Caco-2 (cell line): ENCODE measurements at regions of chr1 and their contacts with region 1.

Region 1: GRCh38 chr1:186680245-186681061 is at the start of gene PTGS2:
- DNase-seq: peak; percentile 93 to 95
- H3K4me3 ChIP-seq: peak within 1 kb of the TSS; percentile 59
- H3K4me3 Mint-ChIP-seq: peak within 1 kb of the TSS; percentile 99
- H3K27ac Mint-ChIP-seq: peak within 1 kb of the TSS; percentile 99
- H3K4me1 ChIP-seq: no peaks in the 10 kb centered on the region
- H3K4me1 Mint-ChIP-seq: peaks cover 10% of the 10 kb centered on the region
- H3K27me3 ChIP-seq: no peaks in the 10 kb centered on the region
- H3K27me3 Mint-ChIP-seq: no peaks in the 10 kb centered on the region
- CTCF ChIP-seq: peak; percentile 36 to 46
- total RNA-seq, gene PTGS2: 18.4 and 24.2 TPM in 2 replicates

Region 2: GRCh38 chr1:186404454-186405051 is 275.9 kb before region 1 on chr1:
- CTCF ChIA-PET with region 1: interaction called, 4 read pairs
- POLR2A ChIA-PET with region 1: no interaction called
- intact Hi-C with region 1: loop called (anchors 1 kb)
- DNase-seq: peak in 1 of 2 experiments; percentile 43
- H3K4me3 ChIP-seq: no peak overlapping the region
- H3K4me3 Mint-ChIP-seq: no peak overlapping the region
- H3K27ac Mint-ChIP-seq: no peak overlapping the region
- H3K4me1 ChIP-seq: no peaks in the 10 kb centered on the region
- H3K4me1 Mint-ChIP-seq: peaks cover 6% of the 10 kb centered on the region
- H3K27me3 ChIP-seq: no peaks in the 10 kb centered on the region
- H3K27me3 Mint-ChIP-seq: no peaks in the 10 kb centered on the region
- CTCF ChIP-seq: peak; percentile 58 to 63

Region 3: GRCh38 chr1:186492531-186493291 is 187.7 kb before region 1 on chr1:
- CTCF ChIA-PET with region 1: interaction called, 3 read pairs
- POLR2A ChIA-PET with region 1: interaction called, 4 read pairs
- intact Hi-C with region 1: loop called (anchors 2 kb)
- DNase-seq: peak; percentile 71 to 72
- H3K4me3 ChIP-seq: no peak overlapping the region
- H3K4me3 Mint-ChIP-seq: peak overlapping the region; percentile 64
- H3K27ac Mint-ChIP-seq: peak overlapping the region; percentile 86
- H3K4me1 ChIP-seq: peaks cover 64% of the 10 kb centered on the region
- H3K4me1 Mint-ChIP-seq: peaks cover 48% of the 10 kb centered on the region
- H3K27me3 ChIP-seq: no peaks in the 10 kb centered on the region
- H3K27me3 Mint-ChIP-seq: no peaks in the 10 kb centered on the region
- CTCF ChIP-seq: no peak

Region 4: GRCh38 chr1:186618401-186619170 is 61.9 kb before region 1 on chr1:
- CTCF ChIA-PET with region 1: interaction called, 4 read pairs
- POLR2A ChIA-PET with region 1: no interaction called
- intact Hi-C with region 1: loop called (anchors 2 kb)
- DNase-seq: no peak
- H3K4me3 ChIP-seq: no peak overlapping the region
- H3K4me3 Mint-ChIP-seq: no peak overlapping the region
- H3K27ac Mint-ChIP-seq: no peak overlapping the region
- H3K4me1 ChIP-seq: no peaks in the 10 kb centered on the region
- H3K4me1 Mint-ChIP-seq: peaks cover 13% of the 10 kb centered on the region
- H3K27me3 ChIP-seq: no peaks in the 10 kb centered on the region
- H3K27me3 Mint-ChIP-seq: no peaks in the 10 kb centered on the region
- CTCF ChIP-seq: no peak

Region 5: GRCh38 chr1:186806477-186806876 is 126.0 kb after region 1 on chr1:
- CTCF ChIA-PET with region 1: interaction called, 11 read pairs
- POLR2A ChIA-PET with region 1: no interaction called
- intact Hi-C with region 1: loop called (anchors 1 kb)
- DNase-seq: peak; percentile 48 to 52
- H3K4me3 ChIP-seq: no peak overlapping the region
- H3K4me3 Mint-ChIP-seq: no peak overlapping the region
- H3K27ac Mint-ChIP-seq: no peak overlapping the region
- H3K4me1 ChIP-seq: no peaks in the 10 kb centered on the region
- H3K4me1 Mint-ChIP-seq: no peaks in the 10 kb centered on the region
- H3K27me3 ChIP-seq: no peaks in the 10 kb centered on the region
- H3K27me3 Mint-ChIP-seq: no peaks in the 10 kb centered on the region
- CTCF ChIP-seq: peak; percentile 61 to 64

Region 6: DNA sequence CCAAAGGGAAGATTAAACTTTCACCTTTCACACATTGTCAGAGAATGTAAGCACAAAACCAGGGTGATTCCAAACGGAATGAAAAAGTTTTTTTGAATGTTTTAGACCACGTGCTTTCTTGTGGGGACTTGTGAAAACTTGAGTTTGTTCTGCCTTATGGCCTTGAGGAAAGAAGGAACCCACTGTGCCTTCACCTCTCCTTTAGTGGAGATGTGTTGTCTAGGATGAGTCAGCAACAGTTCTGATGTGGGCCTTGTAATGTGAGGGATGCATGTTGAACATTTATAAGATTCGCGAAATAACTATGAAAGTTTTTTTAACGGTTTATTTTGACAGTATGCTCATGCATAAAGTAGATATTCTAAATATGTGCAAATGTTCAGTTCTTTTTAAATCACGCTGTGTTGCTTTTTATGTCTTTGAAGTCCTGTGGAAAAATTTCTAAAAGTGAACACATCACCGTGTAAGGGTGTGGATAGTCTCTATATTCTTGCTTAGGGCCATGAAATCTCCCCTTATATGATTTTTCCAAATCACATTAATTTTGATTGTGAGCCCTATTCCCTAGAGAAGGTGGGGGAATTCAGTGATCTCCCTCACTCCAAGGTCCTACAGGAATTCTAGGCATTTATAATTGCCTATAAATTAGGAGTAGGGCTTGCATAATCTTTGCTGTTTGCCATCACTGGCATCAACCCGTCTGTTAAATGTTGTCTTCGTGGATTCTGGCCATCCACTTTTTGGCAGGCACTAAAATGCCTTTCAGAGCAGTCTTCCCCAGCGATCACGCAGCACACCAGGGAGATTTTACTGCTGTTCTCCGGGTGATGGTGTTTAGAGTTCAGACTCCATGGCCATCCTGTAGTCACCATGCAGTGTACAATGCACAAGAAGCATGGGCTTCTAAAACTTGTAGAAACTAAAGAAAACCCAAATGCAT is 195.7 kb after region 1 on chr1:
- CTCF ChIA-PET with region 1: no interaction called
- POLR2A ChIA-PET with region 1: no interaction called
- intact Hi-C with region 1: no loop called
- DNase-seq: no peak
- H3K4me3 ChIP-seq: no peak overlapping the region
- H3K4me3 Mint-ChIP-seq: no peak overlapping the region
- H3K27ac Mint-ChIP-seq: no peak overlapping the region
- H3K4me1 ChIP-seq: no peaks in the 10 kb centered on the region; the same call in 1 of the 2 replicates
- H3K4me1 Mint-ChIP-seq: peaks cover 7% of the 10 kb centered on the region
- H3K27me3 ChIP-seq: no peaks in the 10 kb centered on the region
- H3K27me3 Mint-ChIP-seq: no peaks in the 10 kb centered on the region
- CTCF ChIP-seq: no peak